Calu3 (cell line): ENCODE measurements at regions of chr7 and their contacts with region 1.

Region 1: DNA sequence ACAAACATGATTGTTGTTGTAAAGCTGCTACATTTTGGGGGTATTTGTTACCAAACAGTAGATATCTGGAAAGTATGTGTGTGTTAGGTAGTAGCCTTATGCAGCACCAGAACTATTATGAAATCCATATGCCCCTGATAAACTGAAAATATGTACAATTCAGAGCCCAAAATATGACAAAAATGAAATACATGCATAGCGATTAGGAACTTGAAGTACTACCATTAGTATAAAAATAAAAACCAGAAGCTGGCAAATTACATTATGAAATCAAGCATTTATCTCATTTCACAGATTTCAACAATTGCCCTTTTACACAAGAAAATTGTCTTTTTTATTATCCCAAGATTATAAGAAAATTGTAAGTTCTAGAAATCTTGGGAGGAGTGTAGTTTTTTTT is 33.9 kb downstream of the SLC26A5 start:
- DNase-seq: no peak
- H3K4me3 Mint-ChIP-seq: no peak overlapping the region
- H3K27ac Mint-ChIP-seq: no peak overlapping the region
- H3K4me1 Mint-ChIP-seq: no peaks in the 10 kb centered on the region
- H3K27me3 Mint-ChIP-seq: peaks cover 28% of the 10 kb centered on the region
- CTCF ChIP-seq: no peak

Region 2: GRCh38 chr7:103296901-103297836 is 115.0 kb before region 1 on chr7 and contains the start of gene PMPCB:
- CTCF ChIA-PET with region 1: no interaction called
- intact Hi-C with region 1: loop called (anchors 1 kb)
- DNase-seq: peak; percentile 90
- H3K4me3 Mint-ChIP-seq: peak within 1 kb of the TSS; percentile 73
- H3K27ac Mint-ChIP-seq: peak within 1 kb of the TSS; percentile 33
- H3K4me1 Mint-ChIP-seq: no peaks in the 10 kb centered on the region
- H3K27me3 Mint-ChIP-seq: no peaks in the 10 kb centered on the region
- CTCF ChIP-seq: peak; percentile 81
- total RNA-seq, gene PMPCB: 34.2 and 34.4 TPM in 2 replicates